ENCODE measurements at regions of chr4 and their contacts with region 1.

Region 1: DNA sequence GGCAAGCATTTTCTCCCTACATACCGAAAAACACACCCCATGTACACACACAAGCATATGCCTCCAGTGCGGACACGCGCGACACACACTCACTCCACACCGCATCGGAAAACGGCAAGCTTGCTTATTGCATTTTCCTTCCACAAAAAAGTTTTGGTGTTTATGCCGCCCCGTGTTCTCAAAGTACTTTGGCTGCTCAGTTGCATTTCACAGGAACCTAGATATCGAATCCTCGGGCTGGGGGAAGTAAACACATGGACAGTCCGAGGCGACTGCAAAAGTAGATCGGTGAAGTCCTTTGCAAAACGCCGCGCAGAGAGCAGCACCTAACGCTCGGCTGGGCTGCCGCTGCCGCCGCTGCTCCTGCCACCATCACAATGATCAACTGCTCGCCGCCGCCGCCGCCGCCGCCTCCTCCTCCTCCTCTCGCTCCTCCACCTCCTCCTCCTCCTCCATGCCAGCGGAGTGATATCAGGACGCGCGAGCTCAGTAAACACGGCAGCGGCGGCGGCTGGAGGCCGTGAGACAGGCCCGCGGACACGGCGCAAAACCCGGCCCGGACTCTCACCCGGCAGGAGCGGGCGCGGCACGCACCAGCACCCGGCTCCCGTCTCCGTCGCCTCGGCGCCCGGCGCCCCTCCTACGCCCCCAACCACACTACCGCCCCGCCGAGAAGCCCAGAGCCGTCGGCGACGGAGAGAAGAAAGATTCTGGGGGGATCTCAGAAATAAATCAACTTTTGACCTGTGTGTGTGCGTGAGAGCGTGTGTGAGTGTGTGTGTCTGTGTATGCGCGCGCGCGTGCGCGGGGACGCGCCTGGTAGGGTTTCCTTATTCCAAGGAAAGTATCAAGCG is at the start of gene MAML3:
- DNase-seq: peak; percentile 90
- ATAC-seq: peak; percentile 40
- H3K4me3 Mint-ChIP-seq: peak within 1 kb of the TSS; percentile 86
- H3K27ac Mint-ChIP-seq: peak within 1 kb of the TSS; percentile 80
- H3K4me1 Mint-ChIP-seq: peaks cover 37% of the 10 kb centered on the region
- H3K27me3 Mint-ChIP-seq: peaks cover 13% of the 10 kb centered on the region
- total RNA-seq, gene MAML3: 1.6 to 1.9 TPM

Region 2: DNA sequence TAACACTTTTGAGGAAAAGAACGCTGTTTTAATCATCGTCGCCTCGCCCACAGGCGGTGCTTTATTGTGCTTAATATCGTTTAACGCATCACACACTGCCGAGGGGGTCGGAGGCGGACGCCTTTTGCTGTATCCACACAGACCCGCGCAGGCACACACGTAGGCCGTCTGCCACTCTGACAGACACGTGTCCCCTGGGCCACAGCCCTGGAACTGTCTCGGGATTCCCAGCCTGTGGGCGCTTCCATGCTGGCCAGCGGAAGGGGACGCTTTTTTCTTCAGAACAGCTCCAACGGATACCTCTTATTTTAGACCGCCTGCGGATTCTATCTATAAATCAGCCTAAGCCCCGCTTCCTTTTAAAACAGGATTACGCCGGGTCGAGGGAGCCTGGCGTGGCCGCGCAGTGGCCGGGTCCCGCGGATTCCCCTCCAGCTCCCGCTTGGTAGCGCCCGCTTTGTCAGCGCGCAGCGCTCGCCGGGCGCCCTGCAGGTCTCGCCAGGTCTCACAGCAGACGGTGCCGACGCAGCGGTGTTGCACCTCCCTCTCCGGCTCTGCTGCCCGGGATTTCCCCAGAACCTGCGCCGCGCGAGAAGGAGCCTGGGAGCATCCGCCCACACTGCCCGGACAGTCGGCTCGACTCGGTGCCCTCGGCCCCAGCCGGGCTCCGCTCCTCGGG is 1138.5 kb before region 1 on chr4 and contains the start of gene NOCT:
- CTCF ChIA-PET with region 1: no interaction called
- POLR2A ChIA-PET with region 1: no interaction called
- intact Hi-C with region 1: loop called in 1 of 2 experiments (anchors 5 kb)
- DNase-seq: peak; percentile 98
- ATAC-seq: peak; percentile 92
- H3K4me3 Mint-ChIP-seq: peak within 1 kb of the TSS; percentile 90
- H3K27ac Mint-ChIP-seq: peak within 1 kb of the TSS; percentile 96
- H3K4me1 Mint-ChIP-seq: peaks cover 41% of the 10 kb centered on the region
- H3K27me3 Mint-ChIP-seq: no peaks in the 10 kb centered on the region
- total RNA-seq, gene NOCT: 16.5 to 20.5 TPM

Region 3: DNA sequence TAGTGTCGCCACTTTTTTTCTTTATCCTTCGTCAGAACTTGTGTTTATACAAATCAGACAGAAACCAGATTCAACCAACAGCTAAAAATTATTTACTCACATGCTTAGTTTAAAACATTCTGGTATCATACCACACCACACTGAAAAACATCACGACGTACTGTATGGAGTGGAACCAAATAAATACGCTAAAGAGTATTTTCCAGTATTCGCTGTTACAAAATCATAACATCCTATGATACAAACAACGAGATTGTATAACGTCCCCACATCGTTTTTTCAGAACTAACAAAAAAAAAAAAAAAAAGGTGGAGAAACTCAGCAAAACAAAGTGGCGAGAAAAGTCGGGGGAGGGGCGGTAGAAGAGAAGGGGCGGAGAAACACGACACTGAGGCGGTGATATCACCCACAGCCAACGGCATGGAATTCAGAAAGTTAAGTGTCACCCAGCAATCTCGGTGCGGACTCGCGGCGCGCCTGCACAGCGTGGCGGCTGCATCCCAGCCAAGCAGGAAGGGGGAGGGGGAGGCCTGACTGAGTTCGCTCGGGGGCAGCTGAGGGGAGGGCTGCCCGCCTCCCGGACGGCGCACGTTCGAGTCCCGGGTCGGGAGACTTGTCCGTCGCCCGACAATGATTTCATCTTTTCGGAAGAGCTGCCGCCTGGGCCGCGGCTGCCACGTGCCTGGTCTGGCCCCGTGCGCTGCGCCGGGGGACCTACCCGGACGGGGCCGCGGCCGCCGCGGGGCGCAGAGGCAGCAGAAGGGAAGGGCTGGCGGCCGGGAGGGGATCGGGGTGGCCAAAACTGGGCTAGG is 598.8 kb before region 1 on chr4:
- CTCF ChIA-PET with region 1: no interaction called
- POLR2A ChIA-PET with region 1: no interaction called
- intact Hi-C with region 1: loop called (anchors 1 to 5 kb)
- DNase-seq: peak; percentile 91
- ATAC-seq: peak; percentile 76
- H3K4me3 Mint-ChIP-seq: peak overlapping the region; percentile 96
- H3K27ac Mint-ChIP-seq: peak overlapping the region; percentile 91
- H3K4me1 Mint-ChIP-seq: peaks cover 45% of the 10 kb centered on the region
- H3K27me3 Mint-ChIP-seq: no peaks in the 10 kb centered on the region

Region 4: GRCh38 chr4:139858436-139859225 is 295.3 kb before region 1 on chr4:
- CTCF ChIA-PET with region 1: no interaction called
- POLR2A ChIA-PET with region 1: no interaction called
- intact Hi-C with region 1: loop called (anchors 1 to 5 kb)
- DNase-seq: peak; percentile 55
- ATAC-seq: peak; percentile 94
- H3K4me3 Mint-ChIP-seq: no peak overlapping the region
- H3K27ac Mint-ChIP-seq: no peak overlapping the region
- H3K4me1 Mint-ChIP-seq: peaks cover 32% of the 10 kb centered on the region
- H3K27me3 Mint-ChIP-seq: peaks cover 33% of the 10 kb centered on the region

Region 5: DNA sequence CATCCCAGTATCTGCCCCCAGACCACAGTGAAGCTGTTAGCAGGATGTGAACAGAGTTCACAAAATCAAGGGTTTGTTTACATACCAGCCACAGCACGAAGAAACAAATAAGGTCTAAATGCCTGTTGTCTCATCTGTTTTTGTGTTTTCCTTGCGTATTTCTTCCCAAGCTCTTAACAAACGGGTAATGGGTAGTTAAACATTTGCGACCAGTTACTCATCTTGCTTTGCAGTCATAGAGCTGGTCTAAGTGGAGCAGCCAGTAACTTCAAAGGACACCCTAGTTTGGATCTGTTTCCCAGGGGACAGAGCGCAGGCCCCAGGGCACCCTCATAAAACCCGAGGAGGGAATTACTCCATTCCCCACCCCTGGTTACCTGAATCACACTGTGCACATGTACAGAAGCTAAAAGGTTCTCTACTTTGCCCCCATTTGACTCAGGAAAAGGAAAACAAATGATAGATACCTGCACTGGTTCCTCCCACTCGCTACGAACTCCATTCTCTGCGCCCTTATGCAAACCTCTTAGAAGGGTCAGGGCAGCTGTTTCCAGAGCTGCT is 68.8 kb before region 1 on chr4:
- CTCF ChIA-PET with region 1: no interaction called
- POLR2A ChIA-PET with region 1: no interaction called
- intact Hi-C with region 1: no loop called
- DNase-seq: no peak
- ATAC-seq: no peak
- H3K4me3 Mint-ChIP-seq: no peak overlapping the region
- H3K27ac Mint-ChIP-seq: no peak overlapping the region
- H3K4me1 Mint-ChIP-seq: peaks cover 13% of the 10 kb centered on the region
- H3K27me3 Mint-ChIP-seq: peaks cover 6% of the 10 kb centered on the region

Region 6: GRCh38 chr4:140095694-140096482 is 58.1 kb before region 1 on chr4:
- CTCF ChIA-PET with region 1: interaction called, 3 read pairs
- POLR2A ChIA-PET with region 1: no interaction called
- intact Hi-C with region 1: loop called (anchors 1 kb)
- DNase-seq: peak; percentile 81
- ATAC-seq: peak; percentile 83
- H3K4me3 Mint-ChIP-seq: peak overlapping the region; percentile 75
- H3K27ac Mint-ChIP-seq: peak overlapping the region; percentile 99
- H3K4me1 Mint-ChIP-seq: peaks cover 93% of the 10 kb centered on the region
- H3K27me3 Mint-ChIP-seq: no peaks in the 10 kb centered on the region

Region 7: DNA sequence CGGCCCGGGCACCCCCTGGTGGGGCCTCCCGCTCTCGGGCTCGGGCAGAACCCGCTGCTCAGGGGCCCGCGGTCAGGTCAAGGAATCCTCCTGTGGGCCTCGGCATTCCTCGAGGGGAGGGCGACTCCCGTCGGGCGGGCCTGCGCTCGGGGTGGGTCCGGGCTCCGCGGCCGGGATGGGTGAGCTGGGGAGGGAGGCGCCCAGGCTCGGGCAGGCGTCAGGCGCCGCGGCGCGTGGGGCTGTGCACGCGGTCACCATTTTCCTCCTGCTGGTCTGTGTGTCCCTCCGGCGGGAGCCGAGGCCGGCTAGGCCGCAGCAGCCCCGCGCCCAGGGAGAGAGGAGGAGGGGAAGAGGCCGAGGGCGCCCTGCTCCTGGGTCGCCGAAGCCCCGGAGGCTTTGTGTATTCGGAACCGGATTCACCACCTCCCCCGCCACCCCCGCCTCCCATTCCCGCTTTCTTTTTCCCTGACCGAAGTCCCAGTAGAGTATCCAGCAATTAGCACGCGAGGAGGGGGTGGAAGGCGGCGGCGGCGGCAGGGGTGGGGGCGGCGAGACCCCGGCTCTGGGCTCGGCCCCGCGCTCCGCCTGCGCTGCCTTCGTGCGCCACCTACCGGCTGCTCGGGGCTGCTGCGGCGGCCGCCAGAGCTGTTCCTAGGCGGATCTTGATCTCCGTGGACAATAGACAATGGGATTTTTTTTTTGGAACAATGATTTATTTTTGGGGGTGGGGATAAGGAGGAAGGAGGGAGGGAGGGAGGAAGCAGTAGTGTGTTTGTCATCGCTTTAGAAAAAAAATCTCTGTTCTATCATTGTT is 99.0 kb after region 1 on chr4:
- CTCF ChIA-PET with region 1: interaction called, 10 read pairs
- POLR2A ChIA-PET with region 1: no interaction called
- intact Hi-C with region 1: loop called (anchors 1 kb)
- DNase-seq: peak; percentile 75
- ATAC-seq: peak; percentile 57
- H3K4me3 Mint-ChIP-seq: peak overlapping the region; percentile 59
- H3K27ac Mint-ChIP-seq: peak overlapping the region; percentile 71
- H3K4me1 Mint-ChIP-seq: peaks cover 39% of the 10 kb centered on the region
- H3K27me3 Mint-ChIP-seq: peaks cover 15% of the 10 kb centered on the region